Left ventricle myocardium superior (tissue), 1 donor: ENCODE measurements at regions of chrX and their contacts with region 1.

Region 1: DNA sequence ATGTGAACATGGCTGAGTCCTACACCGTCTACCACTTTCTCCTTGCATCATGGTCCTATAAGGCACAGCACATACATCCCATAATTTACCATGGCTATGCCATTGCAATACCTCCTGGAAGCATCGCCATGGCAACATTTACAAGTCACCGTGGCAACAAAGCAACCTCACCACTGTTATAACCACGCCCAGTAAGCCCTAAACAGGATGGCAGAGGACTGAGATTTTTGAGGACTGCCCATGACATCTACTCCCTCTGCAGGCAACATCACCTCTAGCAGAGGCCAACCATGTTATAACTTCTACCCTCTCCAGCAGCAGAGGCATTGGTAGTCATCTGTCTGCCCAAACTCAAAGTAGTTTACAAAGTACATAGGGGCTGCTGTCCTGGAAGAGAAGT is 29.7 kb downstream of the BCOR start:
- DNase-seq: no peak
- ATAC-seq: no peak

Region 2: DNA sequence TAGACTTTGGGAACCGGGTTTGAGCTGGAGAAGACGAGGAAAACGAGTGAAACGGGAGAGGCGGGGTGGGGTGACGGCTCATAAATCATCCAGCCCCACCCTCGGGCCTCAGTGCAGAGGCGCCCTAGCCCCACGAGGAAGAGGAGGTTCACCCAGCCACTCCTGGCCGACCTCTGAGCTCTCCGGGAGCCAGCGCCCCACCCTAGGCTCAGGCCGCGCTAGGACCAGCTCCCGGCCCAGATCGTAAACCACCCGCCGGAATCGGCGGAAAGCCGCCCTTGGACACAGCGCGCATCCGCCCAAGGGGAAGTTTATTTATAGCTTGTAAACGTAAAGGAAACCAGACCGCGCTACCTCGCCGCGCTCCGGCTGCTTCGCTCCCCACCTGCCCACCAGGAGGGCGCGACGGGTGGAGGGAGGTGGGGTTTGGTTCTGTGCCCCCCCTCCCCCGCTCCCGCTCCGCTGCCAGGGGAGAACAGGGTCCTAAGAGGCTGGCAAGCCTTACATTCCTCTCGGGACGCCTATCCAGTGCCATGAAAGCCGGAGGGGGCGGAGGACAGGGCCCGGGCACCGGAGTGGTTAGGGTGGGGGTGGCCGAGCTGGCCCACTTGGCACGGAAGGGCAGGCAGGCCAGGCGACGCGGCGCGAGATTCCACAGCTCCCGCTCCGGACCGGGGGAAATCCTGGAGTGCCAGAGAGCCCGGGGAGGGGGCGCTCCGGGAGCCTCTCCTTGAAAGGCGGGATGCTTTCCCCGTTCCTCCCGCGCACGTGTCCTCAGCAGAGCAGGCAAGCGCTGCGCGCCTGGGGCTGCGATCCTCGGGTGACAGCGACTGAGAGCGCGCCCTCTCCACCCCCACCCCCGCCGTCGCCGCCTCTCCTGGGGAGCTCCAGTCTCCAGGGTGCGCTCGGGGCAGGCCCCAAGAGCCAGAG is 54.5 kb before region 1 on chrX:
- intact Hi-C with region 1: loop called (anchors 10 kb)
- DNase-seq: peak; percentile 78
- ATAC-seq: peak; percentile 69